ENCODE measurements at regions of chr5 and their contacts with region 1.

Region 1: GRCh38 chr5:134527146-134527960 is 1.9 kb downstream of the JADE2 start:
- DNase-seq: peak; percentile 94
- ATAC-seq: peak; percentile 64 to 77
- H3K4me3 ChIP-seq: peak overlapping the region; percentile 82
- H3K27ac ChIP-seq: peak overlapping the region; percentile 99 to 100
- H3K4me1 ChIP-seq: peaks cover 61% of the 10 kb centered on the region
- CTCF ChIP-seq: peak; percentile 67
- EP300 ChIP-seq: no peak
- POLR2A ChIP-seq: peak; percentile 34; the same call in 1 of the 2 replicates
- RAD21 ChIP-seq: peak; percentile 51 to 55; a peak in 4 of 5 replicates

Region 2: GRCh38 chr5:134189031-134189430 is 338.3 kb before region 1 on chr5:
- CTCF ChIA-PET with region 1: no interaction called
- POLR2A ChIA-PET with region 1: no interaction called
- DNase-seq: no peak
- ATAC-seq: no peak
- H3K4me3 ChIP-seq: no peak overlapping the region
- H3K27ac ChIP-seq: no peak overlapping the region
- H3K4me1 ChIP-seq: no peaks in the 10 kb centered on the region
- CTCF ChIP-seq: no peak
- EP300 ChIP-seq: no peak
- POLR2A ChIP-seq: no peak
- RAD21 ChIP-seq: no peak

Region 3: GRCh38 chr5:134406390-134406789 is 121.0 kb before region 1 on chr5:
- CTCF ChIA-PET with region 1: interaction called, 103 read pairs
- POLR2A ChIA-PET with region 1: interaction called, 23 read pairs
- DNase-seq: no peak
- ATAC-seq: no peak
- H3K4me3 ChIP-seq: no peak overlapping the region
- H3K27ac ChIP-seq: no peak overlapping the region
- H3K4me1 ChIP-seq: peaks cover 17% of the 10 kb centered on the region
- CTCF ChIP-seq: no peak
- EP300 ChIP-seq: no peak
- POLR2A ChIP-seq: no peak
- RAD21 ChIP-seq: no peak

Region 4: DNA sequence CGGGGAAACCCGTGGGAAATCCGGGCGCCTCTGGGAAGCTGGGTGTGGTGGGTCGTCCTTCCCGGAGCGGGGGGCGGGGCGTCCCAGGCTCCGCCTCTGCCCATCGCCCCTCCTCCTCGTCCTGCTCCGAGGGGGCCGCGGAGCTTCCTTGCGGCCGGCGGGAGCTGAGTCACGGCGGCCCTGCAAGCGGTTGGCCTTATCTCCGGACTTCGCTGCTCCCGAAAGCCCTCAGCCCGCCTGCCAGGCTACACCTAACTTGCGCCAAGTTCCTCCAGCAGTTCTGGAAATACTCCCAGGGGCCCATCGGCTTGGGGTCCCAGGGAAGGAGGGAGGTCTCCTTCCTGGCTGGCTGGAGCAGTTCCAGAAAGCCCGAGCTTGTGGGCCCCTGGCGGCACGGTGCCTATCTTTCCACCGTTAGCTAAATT is 61.5 kb before region 1 on chr5:
- CTCF ChIA-PET with region 1: interaction called, 35 read pairs
- POLR2A ChIA-PET with region 1: interaction called, 77 read pairs
- DNase-seq: peak; percentile 89 to 92
- ATAC-seq: peak; percentile 80 to 84
- H3K4me3 ChIP-seq: peak overlapping the region; percentile 72
- H3K27ac ChIP-seq: peak overlapping the region; percentile 99 to 100
- H3K4me1 ChIP-seq: peaks cover 26% of the 10 kb centered on the region
- CTCF ChIP-seq: no peak
- EP300 ChIP-seq: no peak
- POLR2A ChIP-seq: peak; percentile 85
- RAD21 ChIP-seq: peak in 1 of 2 experiments; percentile 6; a peak in 2 of 5 replicates

Region 5: DNA sequence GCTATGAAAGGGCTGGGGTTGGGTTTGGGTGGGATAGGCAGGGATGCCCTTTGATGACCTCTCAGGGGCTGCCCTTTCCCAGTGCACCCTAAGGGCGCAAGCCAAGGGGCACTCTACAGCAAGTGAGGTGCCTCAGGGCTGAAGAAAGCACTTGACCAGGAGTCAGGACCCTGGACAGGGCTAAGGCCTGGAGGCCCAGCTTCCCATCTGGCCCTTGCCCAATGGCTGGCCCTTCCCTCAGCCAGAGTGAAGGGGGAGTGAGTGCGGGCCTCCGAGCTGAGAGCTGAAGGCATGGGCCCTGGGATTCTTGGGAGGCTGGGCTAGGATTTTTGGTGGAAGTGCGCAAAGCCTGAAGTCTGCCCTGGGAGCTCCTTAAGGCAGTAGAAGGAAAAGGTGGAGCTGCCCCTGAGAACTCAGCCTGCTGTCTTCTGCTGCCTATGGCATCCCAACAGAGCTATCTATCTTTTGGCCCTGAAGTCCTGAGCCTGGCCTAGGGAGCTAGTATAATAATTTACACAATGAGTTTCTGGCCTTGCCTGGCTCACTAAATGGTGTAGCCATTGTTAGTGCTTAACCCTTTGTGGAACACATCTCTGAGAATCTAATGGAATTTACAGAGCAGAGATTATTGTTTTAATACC is 14.5 kb after region 1 on chr5:
- CTCF ChIA-PET with region 1: interaction called, 37 read pairs
- POLR2A ChIA-PET with region 1: no interaction called
- DNase-seq: no peak
- ATAC-seq: peak; percentile 45 to 56; a peak in 4 of 6 replicates
- H3K4me3 ChIP-seq: no peak overlapping the region
- H3K27ac ChIP-seq: no peak overlapping the region
- H3K4me1 ChIP-seq: 0 out of 3 replicates have a peak, but pooled peaks cover 2% of the 10 kb centered on the region
- CTCF ChIP-seq: no peak
- EP300 ChIP-seq: no peak
- POLR2A ChIP-seq: no peak
- RAD21 ChIP-seq: no peak

Region 6: DNA sequence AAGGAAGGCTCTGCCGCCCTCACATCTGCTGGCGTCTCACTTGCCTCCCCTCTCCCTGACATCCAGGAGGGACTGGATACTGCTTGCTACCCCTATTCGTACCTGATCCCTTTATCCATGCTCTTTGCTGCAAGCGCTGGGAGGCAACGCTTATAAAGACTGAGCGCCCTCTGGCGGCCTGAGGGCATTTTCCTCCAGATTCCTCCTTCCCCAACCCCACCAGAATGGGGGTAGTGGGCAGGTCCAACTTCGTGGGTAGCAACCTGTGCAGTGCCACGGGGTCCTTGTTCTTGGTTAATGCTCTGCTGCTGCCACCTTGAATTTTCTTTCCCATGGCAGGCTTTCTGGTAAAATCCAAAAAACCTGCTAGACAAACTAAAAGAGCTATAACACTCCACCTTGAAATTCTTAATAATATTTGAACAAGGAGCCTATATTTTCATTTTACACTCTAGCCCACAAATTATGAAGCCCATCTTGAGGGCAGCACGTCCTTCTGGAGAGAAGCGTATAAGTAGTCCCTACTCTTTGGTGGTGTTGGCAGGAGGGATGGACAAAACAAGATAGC is 50.5 kb after region 1 on chr5:
- CTCF ChIA-PET with region 1: interaction called, 149 read pairs
- POLR2A ChIA-PET with region 1: interaction called, 3 read pairs
- DNase-seq: peak; percentile 77 to 86
- ATAC-seq: peak; percentile 77 to 85
- H3K4me3 ChIP-seq: no peak overlapping the region
- H3K27ac ChIP-seq: peak overlapping the region; percentile 39 to 65; a peak in 4 of 6 replicates
- H3K4me1 ChIP-seq: peaks cover 20% of the 10 kb centered on the region
- CTCF ChIP-seq: peak; percentile 85
- EP300 ChIP-seq: no peak
- POLR2A ChIP-seq: no peak
- RAD21 ChIP-seq: peak; percentile 87 to 90

Region 7: GRCh38 chr5:134662971-134663370 is 135.6 kb after region 1 on chr5:
- CTCF ChIA-PET with region 1: no interaction called
- POLR2A ChIA-PET with region 1: no interaction called
- DNase-seq: no peak
- ATAC-seq: no peak
- H3K4me3 ChIP-seq: no peak overlapping the region
- H3K27ac ChIP-seq: no peak overlapping the region
- H3K4me1 ChIP-seq: no peaks in the 10 kb centered on the region
- CTCF ChIP-seq: no peak
- EP300 ChIP-seq: no peak
- POLR2A ChIP-seq: no peak
- RAD21 ChIP-seq: no peak

Measured in A549 (cell line).